ENCODE measurements at regions of chr10 and their contacts with region 1.

Region 1: GRCh38 chr10:33476757-33477273 is 142.3 kb upstream of the NRP1 start:
- H3K4me3 Mint-ChIP-seq: no peak overlapping the region
- H3K27ac Mint-ChIP-seq: no peak overlapping the region
- H3K4me1 Mint-ChIP-seq: peaks cover 21% of the 10 kb centered on the region
- H3K27me3 Mint-ChIP-seq: peaks cover 14% of the 10 kb centered on the region

Region 2: DNA sequence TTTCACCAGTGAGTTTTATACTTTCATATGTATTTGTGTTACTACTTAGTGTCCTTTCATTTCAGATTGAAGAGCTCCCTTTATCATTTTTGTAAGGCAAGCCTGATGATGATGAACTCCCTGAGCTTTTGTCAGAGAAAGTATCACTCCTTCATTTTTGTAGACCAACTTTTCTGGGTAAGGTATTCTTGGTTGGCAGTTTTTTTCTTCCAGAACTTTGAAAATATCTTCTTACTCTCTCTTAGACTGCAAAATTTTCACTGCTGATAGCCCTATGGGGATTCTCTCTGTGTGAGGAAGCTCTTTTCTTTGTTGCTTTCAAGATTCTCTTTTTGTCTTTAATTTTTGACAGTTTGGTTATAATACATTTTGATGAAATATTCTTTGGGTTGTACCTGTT is 995.2 kb before region 1 on chr10:
- intact Hi-C with region 1: no loop called
- H3K4me3 Mint-ChIP-seq: no peak overlapping the region
- H3K27ac Mint-ChIP-seq: no peak overlapping the region
- H3K4me1 Mint-ChIP-seq: no peaks in the 10 kb centered on the region
- H3K27me3 Mint-ChIP-seq: no peaks in the 10 kb centered on the region

Region 3: GRCh38 chr10:33412653-33413361 is 64.0 kb before region 1 on chr10:
- intact Hi-C with region 1: loop called (anchors 2 kb)
- H3K4me3 Mint-ChIP-seq: no peak overlapping the region
- H3K27ac Mint-ChIP-seq: peak overlapping the region; percentile 43
- H3K4me1 Mint-ChIP-seq: peaks cover 25% of the 10 kb centered on the region
- H3K27me3 Mint-ChIP-seq: peaks cover 17% of the 10 kb centered on the region

Measured in dendritic cell treated with granulocyte-macrophage colony-stimulating factor and Interleukin-4, amounts not matched to agents 40 ng/mL and 50 ng/mL, for 4 days (primary cell).